PC-9 (cell line): ENCODE measurements at regions of chr19 and their contacts with region 1.

Region 1: GRCh38 chr19:3275583-3276340 is 51.3 kb downstream of the CELF5 start:
- DNase-seq: peak; percentile 68 to 78
- H3K4me3 ChIP-seq: peak overlapping the region; percentile 50; the same call in 1 of the 2 replicates
- H3K27ac ChIP-seq: no peak overlapping the region
- H3K4me1 ChIP-seq: no peaks in the 10 kb centered on the region
- H3K27me3 ChIP-seq: peaks cover 7% of the 10 kb centered on the region; the same call in 1 of the 2 replicates
- CTCF ChIP-seq: peak; percentile 64

Region 2: DNA sequence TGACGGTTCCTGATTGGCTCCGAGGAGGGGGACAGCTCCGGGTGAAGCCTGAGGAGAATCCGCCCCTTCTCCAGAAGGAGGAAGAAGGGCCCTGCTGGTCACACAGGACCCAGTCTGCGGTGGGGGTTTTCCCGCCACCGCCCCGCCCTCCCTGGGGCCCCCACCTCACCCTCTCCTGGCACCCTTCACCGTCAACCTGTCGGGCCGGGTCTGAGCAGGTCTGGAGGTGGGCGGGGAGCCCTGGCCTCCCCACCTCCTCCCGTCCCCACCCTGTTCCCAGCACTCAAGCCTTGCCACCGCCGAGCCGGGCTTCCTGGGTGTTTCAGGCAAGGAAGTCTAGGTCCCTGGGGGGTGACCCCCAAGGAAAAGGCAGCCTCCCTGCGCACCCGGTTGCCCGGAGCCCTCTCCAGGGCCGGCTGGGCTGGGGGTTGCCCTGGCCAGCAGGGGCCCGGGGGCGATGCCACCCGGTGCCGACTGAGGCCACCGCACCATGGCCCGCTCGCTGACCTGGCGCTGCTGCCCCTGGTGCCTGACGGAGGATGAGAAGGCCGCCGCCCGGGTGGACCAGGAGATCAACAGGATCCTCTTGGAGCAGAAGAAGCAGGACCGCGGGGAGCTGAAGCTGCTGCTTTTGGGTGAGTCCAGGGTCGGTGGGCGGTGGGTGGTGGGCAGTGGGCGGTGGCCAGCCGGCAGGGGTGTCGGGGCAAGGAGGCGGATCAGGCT is 139.6 kb before region 1 on chr19 and contains the start of gene GNA15:
- CTCF ChIA-PET with region 1: no interaction called
- POLR2A ChIA-PET with region 1: interaction called, 13 read pairs
- intact Hi-C with region 1: no loop called
- DNase-seq: peak in 1 of 2 experiments; percentile 64
- H3K4me3 ChIP-seq: peak within 1 kb of the TSS; percentile 68
- H3K27ac ChIP-seq: peak within 1 kb of the TSS; percentile 56
- H3K4me1 ChIP-seq: no peaks in the 10 kb centered on the region; the same call in 1 of the 2 replicates
- H3K27me3 ChIP-seq: no peaks in the 10 kb centered on the region
- CTCF ChIP-seq: no peak
- total RNA-seq, gene GNA15: 14.2 and 16.3 TPM in 2 replicates

Region 3: GRCh38 chr19:3146677-3147100 is 129.1 kb before region 1 on chr19:
- CTCF ChIA-PET with region 1: interaction called, 9 read pairs
- POLR2A ChIA-PET with region 1: interaction called, 26 read pairs
- intact Hi-C with region 1: no loop called
- DNase-seq: peak in 1 of 2 experiments; percentile 37
- H3K4me3 ChIP-seq: no peak overlapping the region
- H3K27ac ChIP-seq: no peak overlapping the region
- H3K4me1 ChIP-seq: peaks cover 14% of the 10 kb centered on the region
- H3K27me3 ChIP-seq: no peaks in the 10 kb centered on the region
- CTCF ChIP-seq: peak; percentile 82

Region 4: GRCh38 chr19:3185482-3186376 is 90.0 kb before region 1 on chr19 and contains the start of gene NCLN:
- CTCF ChIA-PET with region 1: no interaction called
- POLR2A ChIA-PET with region 1: interaction called, 14 read pairs
- intact Hi-C with region 1: no loop called
- DNase-seq: peak; percentile 74 to 87
- H3K4me3 ChIP-seq: peak within 1 kb of the TSS; percentile 73
- H3K27ac ChIP-seq: no peak within 1 kb of the TSS
- H3K4me1 ChIP-seq: 0 out of 2 replicates have a peak, but pooled peaks cover 8% of the 10 kb centered on the region
- H3K27me3 ChIP-seq: no peaks in the 10 kb centered on the region
- CTCF ChIP-seq: no peak
- total RNA-seq, gene NCLN: 46.0 and 61.4 TPM in 2 replicates

Region 5: GRCh38 chr19:3606690-3607289 is 331.0 kb after region 1 on chr19 and contains the start of gene TBXA2R:
- CTCF ChIA-PET with region 1: no interaction called
- POLR2A ChIA-PET with region 1: no interaction called
- intact Hi-C with region 1: no loop called
- DNase-seq: peak in 1 of 2 experiments; percentile 50
- H3K4me3 ChIP-seq: peak within 1 kb of the TSS; percentile 33; the same call in 1 of the 2 replicates
- H3K27ac ChIP-seq: no peak within 1 kb of the TSS
- H3K4me1 ChIP-seq: 0 out of 2 replicates have a peak, but pooled peaks cover 3% of the 10 kb centered on the region
- H3K27me3 ChIP-seq: no peaks in the 10 kb centered on the region
- CTCF ChIP-seq: no peak
- total RNA-seq, gene TBXA2R: 0.38 TPM in 1 of 2 replicates, not detected in the other